ENCODE measurements at regions of chr11 and their contacts with region 1.

Region 1: GRCh38 chr11:108703916-108704315 is 39.0 kb downstream of the DDX10 start:
- DNase-seq: no peak
- H3K4me3 ChIP-seq: no peak overlapping the region
- CTCF ChIP-seq: no peak

Region 2: DNA sequence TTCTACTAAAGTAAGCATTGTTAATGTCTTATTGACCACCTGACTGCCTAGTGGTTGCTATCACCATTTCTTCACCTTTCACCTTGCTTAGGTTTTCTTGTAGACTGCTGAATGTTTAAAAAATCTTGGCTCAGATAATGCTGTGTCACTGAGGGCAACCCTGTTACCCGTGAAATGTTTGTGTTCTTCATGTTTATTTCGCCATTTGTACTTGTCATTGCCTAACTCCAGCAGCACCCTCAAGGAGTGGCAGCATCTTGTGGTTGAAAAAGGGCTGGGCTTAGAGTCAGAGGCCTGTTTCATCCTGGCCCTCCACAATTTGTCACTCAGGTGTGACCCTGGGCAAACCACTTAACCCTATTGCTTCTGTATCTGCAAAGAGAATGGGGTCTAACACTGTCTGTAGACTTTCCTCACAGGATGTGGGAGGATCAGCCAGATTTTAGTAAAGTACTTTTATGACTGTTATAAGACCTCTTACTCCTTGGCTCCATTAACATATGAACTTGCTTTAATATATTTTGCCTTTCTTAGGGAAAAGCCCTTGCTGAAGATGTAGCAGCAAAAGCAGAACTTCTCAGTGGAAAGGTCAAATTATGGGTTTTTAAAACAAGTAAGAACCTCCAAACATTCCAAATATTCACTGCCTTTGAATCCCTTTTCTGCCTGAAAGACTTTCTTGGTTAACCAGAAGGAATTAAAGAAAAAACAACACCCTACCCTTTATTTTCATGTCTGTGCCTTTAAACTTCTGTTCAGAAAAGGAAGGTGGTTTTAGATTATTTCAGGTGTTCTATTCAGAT is 563.6 kb after region 1 on chr11:
- in situ Hi-C with region 1: loop called (anchors 10 kb)
- DNase-seq: peak; percentile 19
- H3K4me3 ChIP-seq: no peak overlapping the region
- CTCF ChIP-seq: no peak